ENCODE measurements at regions of chr3 and their contacts with region 1.

Region 1: GRCh38 chr3:81643721-81644120 is 117.7 kb downstream of the GBE1 start:
- DNase-seq: no peak
- ATAC-seq: peak; percentile 36 to 70

Region 2: DNA sequence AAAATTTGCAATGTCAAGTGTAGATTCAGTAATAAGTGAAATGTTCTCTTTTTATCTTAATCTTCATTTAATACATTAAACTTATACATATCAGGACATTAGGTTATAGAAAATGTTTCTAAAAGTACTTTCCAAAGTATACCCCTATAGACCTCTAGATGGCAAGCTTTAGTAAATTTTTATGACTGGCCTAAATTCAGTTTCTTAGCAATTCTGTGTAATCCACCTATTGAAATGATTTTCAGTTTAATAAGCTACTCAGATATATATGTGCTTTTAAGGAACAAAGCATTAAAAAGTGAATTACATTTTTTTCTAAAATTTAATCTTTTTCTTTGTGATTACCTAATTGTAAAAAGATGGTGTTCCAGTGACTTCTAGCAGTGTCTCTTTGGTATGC is 224.5 kb before region 1 on chr3:
- intact Hi-C with region 1: loop called in 1 of 2 experiments (anchors 5 kb)
- DNase-seq: no peak
- ATAC-seq: no peak